CD4-positive, alpha-beta T cell (primary cell): ENCODE measurements at regions of chrX and their contacts with region 1.

Region 1: GRCh38 chrX:31563792-31564191 is 492.0 kb upstream of the FTHL17 start:
- DNase-seq: no peak
- ATAC-seq: no peak
- H3K4me3 ChIP-seq: no peak overlapping the region
- H3K4me3 Mint-ChIP-seq: no peak overlapping the region
- H3K27ac ChIP-seq: no peak overlapping the region
- H3K27ac Mint-ChIP-seq: no peak overlapping the region
- H3K4me1 ChIP-seq: no peaks in the 10 kb centered on the region
- H3K4me1 Mint-ChIP-seq: no peaks in the 10 kb centered on the region
- H3K27me3 ChIP-seq: no peaks in the 10 kb centered on the region
- H3K27me3 Mint-ChIP-seq: no peaks in the 10 kb centered on the region
- CTCF ChIP-seq: no peak

Region 2: DNA sequence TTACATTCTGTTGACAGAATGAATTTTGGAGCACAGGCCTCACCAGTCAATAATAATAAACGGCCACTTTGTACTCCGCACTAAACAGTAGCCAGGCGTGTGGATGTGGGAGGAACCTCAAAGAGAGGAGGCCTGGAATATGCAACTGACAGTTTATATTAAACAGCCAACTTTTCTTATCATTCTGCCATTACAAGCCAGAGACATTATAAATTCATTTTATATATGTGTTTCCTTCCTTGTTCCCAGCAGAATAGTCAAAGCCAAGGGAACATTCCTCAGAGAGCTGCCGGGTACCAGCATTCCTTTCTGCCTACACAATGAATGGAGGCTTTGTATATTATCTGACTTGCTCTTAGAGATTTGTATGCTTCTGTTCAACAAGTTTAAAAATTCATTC is 55.5 kb before region 1 on chrX:
- CTCF ChIA-PET with region 1: no interaction called
- POLR2A ChIA-PET with region 1: no interaction called
- intact Hi-C with region 1: loop called in 1 of 2 experiments (anchors 10 kb)
- DNase-seq: no peak
- ATAC-seq: no peak
- H3K4me3 ChIP-seq: no peak overlapping the region
- H3K4me3 Mint-ChIP-seq: no peak overlapping the region
- H3K27ac ChIP-seq: no peak overlapping the region
- H3K27ac Mint-ChIP-seq: no peak overlapping the region
- H3K4me1 ChIP-seq: no peaks in the 10 kb centered on the region
- H3K4me1 Mint-ChIP-seq: no peaks in the 10 kb centered on the region
- H3K27me3 ChIP-seq: no peaks in the 10 kb centered on the region
- H3K27me3 Mint-ChIP-seq: no peaks in the 10 kb centered on the region
- CTCF ChIP-seq: no peak